ENCODE measurements at regions of chr1 and their contacts with region 1.

Region 1: DNA sequence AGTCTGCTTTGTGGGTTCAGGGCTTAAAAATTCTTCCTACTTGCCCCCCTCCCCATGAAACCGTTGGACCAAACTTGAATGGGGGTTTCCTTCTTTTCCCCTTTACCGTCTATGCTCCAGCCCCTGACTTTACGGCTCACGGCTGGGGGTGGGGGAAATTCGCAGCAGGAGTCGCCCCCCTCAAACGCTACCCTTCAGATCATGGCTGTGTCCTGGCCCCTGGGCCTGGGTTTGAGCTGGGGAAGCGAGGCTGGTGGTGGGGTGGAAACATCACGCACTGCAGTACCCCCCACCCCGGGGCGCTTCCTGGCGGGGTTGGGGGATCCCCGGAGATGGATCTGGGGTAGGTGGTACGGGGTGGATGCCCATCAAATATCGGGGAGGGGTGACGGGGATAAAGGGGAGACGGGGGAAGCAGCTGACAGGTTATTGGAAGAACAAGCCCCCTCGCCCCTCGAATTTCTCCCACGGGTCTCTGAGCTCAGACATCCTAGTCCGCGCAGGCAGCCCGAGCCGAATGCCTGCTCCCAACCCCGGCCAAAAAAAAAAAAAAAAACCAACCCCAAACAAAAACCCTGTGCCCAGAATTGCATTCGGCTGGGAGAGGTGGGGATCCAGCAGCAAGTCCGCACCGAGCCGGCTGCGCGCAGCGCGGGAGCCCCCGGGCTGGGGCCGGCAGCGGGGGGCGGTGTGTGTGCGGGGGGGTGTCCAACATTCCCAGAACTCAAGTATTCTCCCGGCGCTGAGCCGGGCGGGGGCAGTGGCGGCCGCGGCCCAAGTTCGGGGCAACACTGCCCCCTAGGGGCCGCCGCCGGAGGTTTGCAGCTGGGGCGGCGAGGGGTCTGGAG is 59.0 kb upstream of the ACOT11 start:
- DNase-seq: no peak
- H3K4me3 ChIP-seq: peak overlapping the region; percentile 56
- CTCF ChIP-seq: peak; percentile 84

Region 2: DNA sequence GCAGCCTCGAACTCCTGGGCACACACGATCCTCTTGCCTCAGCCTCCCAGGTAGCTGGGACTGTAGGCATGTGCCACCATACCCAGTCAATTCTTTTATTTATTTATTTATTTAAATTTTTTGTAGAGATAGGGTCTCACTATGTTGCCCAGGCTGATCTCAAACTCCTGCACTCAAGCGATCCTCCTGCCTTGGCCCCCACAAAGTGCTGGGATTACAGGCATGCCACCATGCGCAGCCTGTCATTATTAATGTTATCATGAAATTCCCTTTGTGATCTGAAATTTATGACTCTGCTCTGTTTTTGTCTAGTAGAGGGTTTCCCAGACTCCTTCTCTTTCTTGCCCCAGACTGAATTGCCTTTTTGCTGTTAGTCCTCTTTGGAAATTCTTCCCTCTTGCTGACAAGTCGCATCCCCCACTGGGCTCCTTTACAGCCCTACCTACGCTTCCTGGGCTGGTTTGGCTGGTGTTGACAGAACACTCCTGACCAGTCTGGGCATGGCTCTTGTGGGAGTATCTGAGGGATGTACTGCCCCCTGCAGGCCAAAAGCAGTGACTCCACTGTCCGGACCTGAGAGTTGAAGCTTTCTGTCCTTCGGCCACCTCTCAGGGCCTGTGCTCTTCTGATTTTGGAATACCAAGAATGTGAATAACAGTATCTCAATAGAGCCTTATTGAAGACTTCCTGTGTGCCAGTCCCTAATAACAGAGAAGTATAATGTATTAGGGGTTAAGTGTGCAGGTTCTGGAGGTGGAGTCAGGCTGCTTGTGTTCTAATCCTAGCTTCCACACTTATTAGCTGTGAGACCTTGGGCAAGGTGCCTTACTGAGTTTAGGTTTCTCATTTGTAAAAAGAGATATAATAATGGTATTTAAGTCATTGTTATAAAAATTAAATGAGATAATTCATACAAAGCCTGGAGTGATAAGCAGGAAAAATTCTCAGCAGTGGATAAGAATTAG is 407.4 kb before region 1 on chr1:
- CTCF ChIA-PET with region 1: interaction called, 11 read pairs
- POLR2A ChIA-PET with region 1: no interaction called
- DNase-seq: no peak
- H3K4me3 ChIP-seq: no peak overlapping the region
- CTCF ChIP-seq: peak; percentile 70

Region 3: GRCh38 chr1:54180701-54181360 is 308.2 kb before region 1 on chr1:
- CTCF ChIA-PET with region 1: interaction called, 10 read pairs
- POLR2A ChIA-PET with region 1: no interaction called
- DNase-seq: no peak
- H3K4me3 ChIP-seq: no peak overlapping the region
- CTCF ChIP-seq: no peak

Region 4: DNA sequence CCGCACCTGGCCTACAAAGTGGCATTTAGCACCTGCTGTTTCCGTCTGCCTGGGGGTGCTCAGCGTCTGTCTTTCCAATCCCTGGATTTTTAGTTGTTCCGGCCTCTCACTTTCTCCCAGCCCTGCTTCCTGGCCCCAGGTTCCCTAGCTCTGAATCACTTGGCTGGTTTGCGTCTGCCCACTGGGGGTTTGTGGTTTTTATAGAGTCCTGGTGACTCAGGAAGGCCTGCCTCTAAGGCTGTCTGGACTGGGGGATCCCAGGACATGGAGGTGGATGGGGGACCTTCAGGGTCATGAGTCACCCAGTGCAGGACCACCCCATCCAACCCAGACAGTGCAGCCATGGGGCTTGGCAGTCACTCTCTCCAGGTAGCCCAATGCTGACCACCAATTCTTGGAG is 235.5 kb before region 1 on chr1:
- CTCF ChIA-PET with region 1: interaction called, 10 read pairs
- POLR2A ChIA-PET with region 1: no interaction called
- DNase-seq: peak; percentile 83
- H3K4me3 ChIP-seq: no peak overlapping the region
- CTCF ChIP-seq: no peak

Region 5: DNA sequence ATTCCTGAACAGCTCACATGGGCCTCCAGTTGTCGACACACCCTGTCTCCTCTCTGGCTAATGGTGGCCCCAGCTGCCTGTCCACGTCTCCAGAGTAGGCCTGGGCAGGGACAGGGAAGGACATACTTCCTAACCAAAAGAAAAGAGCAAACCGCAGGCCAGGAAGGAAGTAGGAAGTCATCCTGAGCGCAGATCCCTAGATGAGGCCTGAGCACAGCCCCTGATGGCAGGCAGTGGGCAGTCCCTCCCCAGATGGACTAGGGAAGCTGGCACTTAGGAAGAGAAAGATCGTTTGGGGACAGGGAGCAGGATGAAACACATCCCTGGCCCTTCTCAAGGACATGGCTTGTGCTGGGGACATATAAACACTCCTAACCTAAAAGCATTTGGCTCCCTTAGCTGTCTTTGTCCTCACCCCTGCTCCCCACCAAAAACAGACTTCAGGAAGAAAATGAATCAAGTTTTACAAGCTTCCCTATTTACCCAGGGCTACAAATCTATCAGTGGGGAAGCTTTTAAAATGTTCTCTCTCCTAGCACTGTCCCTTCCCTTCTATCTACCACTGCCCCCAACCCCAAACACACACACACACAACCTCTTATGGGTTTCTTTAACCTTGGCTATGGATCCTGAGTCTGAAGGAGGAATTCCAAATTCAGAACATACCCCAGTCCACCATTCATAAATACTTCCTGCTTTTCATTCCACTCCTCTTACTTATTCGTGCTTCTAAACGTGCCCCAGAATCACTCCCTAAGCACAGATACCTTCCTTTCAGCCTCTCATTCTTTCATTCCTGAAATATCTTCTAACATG is 103.9 kb before region 1 on chr1:
- CTCF ChIA-PET with region 1: interaction called, 13 read pairs
- POLR2A ChIA-PET with region 1: no interaction called
- DNase-seq: no peak
- H3K4me3 ChIP-seq: no peak overlapping the region
- CTCF ChIP-seq: no peak

Region 6: GRCh38 chr1:54499360-54500106 is 10.5 kb after region 1 on chr1:
- CTCF ChIA-PET with region 1: interaction called, 34 read pairs
- POLR2A ChIA-PET with region 1: interaction called, 4 read pairs
- DNase-seq: no peak
- H3K4me3 ChIP-seq: peak overlapping the region; percentile 42
- CTCF ChIP-seq: peak; percentile 54

Measured in AG04449 (cell line).